PC-9 (cell line): ENCODE measurements at regions of chr3 and their contacts with region 1.

Region 1: DNA sequence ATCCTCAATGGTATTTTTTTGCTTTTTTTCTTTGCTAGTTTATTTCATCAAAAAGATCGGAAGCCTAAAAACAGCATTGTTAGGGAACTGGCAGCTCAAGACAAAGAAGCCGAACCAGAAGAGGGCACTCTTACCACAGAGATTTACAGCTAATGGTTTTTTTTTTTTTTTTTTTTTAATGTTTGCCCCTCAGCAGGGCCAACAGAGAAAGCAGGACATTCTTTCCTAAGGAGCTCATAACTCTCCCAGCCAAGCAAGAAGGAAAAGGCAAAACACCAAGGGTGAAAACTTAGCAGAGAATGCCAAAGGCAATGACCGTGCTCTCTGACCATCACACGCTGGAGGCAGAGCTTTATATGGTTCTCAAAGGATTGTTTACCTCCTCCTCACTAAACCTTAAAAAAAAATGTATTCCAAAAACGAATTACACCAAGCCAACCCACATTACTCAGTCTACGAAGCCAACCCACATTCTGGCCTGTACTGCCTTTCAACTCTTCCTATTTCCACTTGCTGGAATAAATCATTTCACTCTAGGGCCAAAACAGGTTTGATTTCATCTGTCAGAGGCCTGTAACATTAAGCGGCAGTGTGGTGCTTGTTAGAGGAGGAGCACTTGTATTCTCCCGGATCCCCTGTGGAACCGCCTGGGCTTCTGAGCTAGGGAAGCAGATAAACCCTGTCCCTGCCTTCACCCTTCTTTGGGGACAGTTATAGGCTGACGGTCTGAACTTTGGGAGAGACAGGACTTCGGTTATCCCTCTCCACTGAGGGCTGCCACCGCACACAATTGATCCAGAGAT is 35.6 kb upstream of the GYG1 start:
- DNase-seq: peak; percentile 50 to 80
- H3K4me3 ChIP-seq: no peak overlapping the region
- H3K27ac ChIP-seq: peak overlapping the region; percentile 28; the same call in 1 of the 2 replicates
- H3K4me1 ChIP-seq: peaks cover 7% of the 10 kb centered on the region; the same call in 1 of the 2 replicates
- H3K27me3 ChIP-seq: no peaks in the 10 kb centered on the region
- CTCF ChIP-seq: peak; percentile 72

Region 2: DNA sequence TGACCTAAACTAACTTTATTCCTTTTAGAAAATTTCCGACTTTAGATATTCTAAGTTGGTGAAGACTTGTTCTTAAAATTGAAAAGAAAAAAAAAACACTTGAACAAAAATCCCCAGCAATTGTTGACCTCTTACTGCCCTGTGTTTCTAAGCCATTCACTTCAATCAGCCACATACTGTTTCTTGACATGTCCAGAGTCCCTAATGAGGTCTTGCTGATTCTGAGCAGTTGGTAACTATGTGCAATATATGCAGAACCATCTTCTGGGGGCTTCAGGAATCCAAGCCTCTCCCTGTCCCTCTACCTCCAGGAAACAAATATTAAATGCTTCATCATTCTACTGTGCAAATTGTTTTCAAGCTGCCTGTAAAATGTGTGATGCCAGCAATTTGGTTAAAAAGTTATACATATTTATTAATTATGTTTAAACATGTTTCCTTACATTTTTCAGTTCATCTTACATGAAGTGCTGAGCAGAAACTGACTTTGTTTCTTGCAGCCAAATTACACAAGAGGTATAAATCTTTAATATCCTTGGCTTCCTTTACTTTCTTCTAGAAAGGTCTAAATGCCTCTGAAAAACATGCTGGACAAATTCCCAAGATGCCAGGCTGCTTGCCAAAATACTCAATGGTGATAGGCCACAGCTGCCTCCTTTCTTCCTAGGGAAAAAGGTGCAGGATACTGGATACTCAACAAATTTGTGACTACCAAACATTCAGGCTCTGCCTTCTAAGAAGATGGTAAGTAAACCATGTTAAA is 15.8 kb after region 1 on chr3:
- CTCF ChIA-PET with region 1: interaction called, 13 read pairs
- POLR2A ChIA-PET with region 1: no interaction called
- intact Hi-C with region 1: no loop called
- DNase-seq: no peak
- H3K4me3 ChIP-seq: no peak overlapping the region
- H3K27ac ChIP-seq: no peak overlapping the region
- H3K4me1 ChIP-seq: no peaks in the 10 kb centered on the region
- H3K27me3 ChIP-seq: no peaks in the 10 kb centered on the region
- CTCF ChIP-seq: no peak

Region 3: DNA sequence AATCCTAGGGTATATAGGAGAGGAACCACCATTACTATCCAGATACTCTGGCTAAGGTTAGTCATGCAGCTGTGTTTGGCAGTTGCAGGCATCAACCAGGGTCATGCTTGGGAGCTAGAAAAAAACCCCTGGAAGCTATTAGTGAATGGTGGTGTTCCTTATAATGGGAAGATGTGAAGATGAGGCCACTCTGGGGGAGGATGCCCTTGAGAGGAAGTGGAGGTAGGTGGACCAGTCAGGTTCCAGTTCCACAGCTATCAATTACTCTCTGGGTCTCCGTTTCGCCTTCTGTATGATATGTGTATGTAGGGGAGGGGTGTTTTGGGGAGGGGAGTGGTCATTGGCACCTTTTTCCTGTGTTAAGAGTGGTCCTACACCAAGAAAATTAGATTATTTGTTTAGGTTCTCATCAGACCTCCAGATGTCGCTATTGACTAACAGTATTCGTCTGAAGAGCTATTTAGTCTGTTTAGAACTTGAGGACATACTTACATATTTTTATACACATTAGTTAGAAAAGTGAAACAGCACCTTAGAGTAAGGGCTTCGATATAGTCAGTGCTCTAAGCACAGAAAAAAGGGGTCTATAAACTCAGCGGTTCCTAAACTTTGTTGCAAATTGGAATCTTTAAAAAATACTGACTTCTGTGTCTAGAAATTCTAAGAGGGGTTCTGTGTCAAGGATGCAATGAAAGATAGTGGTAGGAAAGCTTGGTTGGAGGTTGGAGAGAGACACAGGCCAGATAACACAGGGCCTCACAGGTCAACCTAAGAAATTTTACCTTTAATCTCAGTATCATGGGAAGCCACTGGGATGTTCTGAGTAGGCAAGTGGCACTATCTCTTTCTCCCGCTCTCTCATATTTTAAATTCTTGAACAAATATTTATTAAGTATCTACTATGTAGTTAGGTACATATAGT is 164.6 kb after region 1 on chr3:
- CTCF ChIA-PET with region 1: interaction called, 31 read pairs
- POLR2A ChIA-PET with region 1: no interaction called
- intact Hi-C with region 1: loop called (anchors 2 kb)
- DNase-seq: peak in 1 of 2 experiments; percentile 54
- H3K4me3 ChIP-seq: no peak overlapping the region
- H3K27ac ChIP-seq: no peak overlapping the region
- H3K4me1 ChIP-seq: no peaks in the 10 kb centered on the region
- H3K27me3 ChIP-seq: no peaks in the 10 kb centered on the region
- CTCF ChIP-seq: peak; percentile 76

Region 4: GRCh38 chr3:149306751-149307434 is 351.1 kb after region 1 on chr3:
- CTCF ChIA-PET with region 1: interaction called, 10 read pairs
- POLR2A ChIA-PET with region 1: no interaction called
- intact Hi-C with region 1: no loop called
- DNase-seq: no peak
- H3K4me3 ChIP-seq: no peak overlapping the region
- H3K27ac ChIP-seq: no peak overlapping the region
- H3K4me1 ChIP-seq: peaks cover 28% of the 10 kb centered on the region
- H3K27me3 ChIP-seq: no peaks in the 10 kb centered on the region
- CTCF ChIP-seq: no peak

Region 5: GRCh38 chr3:149366941-149367840 is 411.4 kb after region 1 on chr3:
- CTCF ChIA-PET with region 1: interaction called, 16 read pairs
- POLR2A ChIA-PET with region 1: no interaction called
- intact Hi-C with region 1: no loop called
- DNase-seq: peak; percentile 86 to 99
- H3K4me3 ChIP-seq: 0 out of 2 replicates have a peak overlapping the region, but pooled peaks have one; percentile 6
- H3K27ac ChIP-seq: peak overlapping the region; percentile 99
- H3K4me1 ChIP-seq: peaks cover 63% of the 10 kb centered on the region
- H3K27me3 ChIP-seq: no peaks in the 10 kb centered on the region
- CTCF ChIP-seq: no peak

Region 6: GRCh38 chr3:149512209-149512782 is 556.6 kb after region 1 on chr3:
- CTCF ChIA-PET with region 1: interaction called, 5 read pairs
- POLR2A ChIA-PET with region 1: no interaction called
- intact Hi-C with region 1: loop called (anchors 5 kb)
- DNase-seq: peak; percentile 53 to 73
- H3K4me3 ChIP-seq: no peak overlapping the region
- H3K27ac ChIP-seq: no peak overlapping the region
- H3K4me1 ChIP-seq: peaks cover 12% of the 10 kb centered on the region; the same call in 1 of the 2 replicates
- H3K27me3 ChIP-seq: no peaks in the 10 kb centered on the region
- CTCF ChIP-seq: peak; percentile 86

Region 7: GRCh38 chr3:150421799-150422548 is 1466.2 kb after region 1 on chr3:
- CTCF ChIA-PET with region 1: interaction called, 14 read pairs
- POLR2A ChIA-PET with region 1: no interaction called
- intact Hi-C with region 1: no loop called
- DNase-seq: peak in 1 of 2 experiments; percentile 10
- H3K4me3 ChIP-seq: no peak overlapping the region
- H3K27ac ChIP-seq: peak overlapping the region; percentile 10; the same call in 1 of the 2 replicates
- H3K4me1 ChIP-seq: peaks cover 53% of the 10 kb centered on the region
- H3K27me3 ChIP-seq: no peaks in the 10 kb centered on the region
- CTCF ChIP-seq: no peak